Activated CD4-positive, alpha-beta T cell treated with anti-CD3 and anti-CD28 coated beads, Interleukin-2, amount 10 ng/mL, durations not matched to agents 7 days and 5 days (primary cell): ENCODE measurements at regions of chr22 and their contacts with region 1.

Region 1: GRCh38 chr22:42090596-42091454 is at the start of gene NDUFA6:
- DNase-seq: peak; percentile 99
- H3K4me3 Mint-ChIP-seq: peak within 1 kb of the TSS; percentile 98
- H3K27ac Mint-ChIP-seq: peak within 1 kb of the TSS; percentile 99
- H3K4me1 Mint-ChIP-seq: peaks cover 29% of the 10 kb centered on the region
- H3K27me3 Mint-ChIP-seq: no peaks in the 10 kb centered on the region
- total RNA-seq, gene NDUFA6: 85.9 to 89.8 TPM

Region 2: DNA sequence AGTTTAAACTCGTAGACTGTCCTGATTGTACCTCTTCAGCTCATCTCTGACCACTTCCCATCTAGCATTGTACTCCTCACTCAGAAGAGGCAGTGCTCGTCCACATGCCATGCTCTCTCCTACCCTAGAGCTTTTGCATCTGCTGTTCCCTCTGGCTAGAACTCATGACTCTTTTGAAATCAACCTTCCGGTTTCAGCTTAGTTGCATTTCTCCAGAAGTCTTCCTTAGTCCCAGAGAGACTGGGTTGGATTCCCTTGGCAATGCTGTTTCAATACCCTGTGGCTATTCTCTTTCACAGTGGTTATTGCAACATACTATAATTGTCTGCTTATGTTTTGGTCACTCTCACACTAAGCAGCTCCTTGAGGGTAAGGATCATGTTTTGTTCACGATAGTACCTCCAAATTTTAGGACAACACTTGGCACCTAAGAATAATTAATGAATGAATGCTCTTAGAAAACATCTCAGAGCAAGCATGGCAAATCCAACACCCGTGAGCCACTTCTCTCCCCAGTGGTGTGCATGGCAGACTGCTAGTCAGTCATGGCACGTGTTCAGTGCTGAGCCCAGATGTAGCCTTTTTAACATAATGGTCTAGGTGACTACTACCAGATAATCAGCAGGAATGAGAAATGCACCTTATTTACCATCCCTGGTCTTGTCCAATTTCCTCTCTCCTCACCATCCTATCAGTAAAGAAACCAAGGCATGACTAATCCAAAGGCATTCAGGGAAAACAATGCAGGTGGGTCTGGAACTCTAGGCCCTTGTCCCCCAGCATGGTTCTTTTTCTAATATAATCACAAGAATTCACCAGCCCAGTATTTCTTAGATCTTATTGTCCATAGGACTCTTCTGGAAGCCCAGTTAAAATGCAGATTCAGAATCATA is 107.1 kb before region 1 on chr22:
- CTCF ChIA-PET with region 1: no interaction called
- POLR2A ChIA-PET with region 1: no interaction called
- DNase-seq: no peak
- H3K4me3 Mint-ChIP-seq: no peak overlapping the region
- H3K27ac Mint-ChIP-seq: no peak overlapping the region
- H3K4me1 Mint-ChIP-seq: no peaks in the 10 kb centered on the region
- H3K27me3 Mint-ChIP-seq: peaks cover 5% of the 10 kb centered on the region

Region 3: GRCh38 chr22:42070517-42071422 is 20.1 kb before region 1 on chr22 and contains the start of gene NAGA:
- CTCF ChIA-PET with region 1: interaction called, 19 read pairs
- POLR2A ChIA-PET with region 1: interaction called, 5 read pairs
- DNase-seq: peak; percentile 97
- H3K4me3 Mint-ChIP-seq: peak within 1 kb of the TSS; percentile 87
- H3K27ac Mint-ChIP-seq: peak within 1 kb of the TSS; percentile 93
- H3K4me1 Mint-ChIP-seq: peaks cover 50% of the 10 kb centered on the region
- H3K27me3 Mint-ChIP-seq: no peaks in the 10 kb centered on the region
- total RNA-seq, gene NAGA: 22.4 to 23.0 TPM

Region 4: GRCh38 chr22:42079319-42080251 is 11.2 kb before region 1 on chr22 and contains the start of gene SMDT1:
- CTCF ChIA-PET with region 1: interaction called, 50 read pairs
- POLR2A ChIA-PET with region 1: interaction called, 4 read pairs
- DNase-seq: peak; percentile 99
- H3K4me3 Mint-ChIP-seq: peak within 1 kb of the TSS; percentile 96
- H3K27ac Mint-ChIP-seq: peak within 1 kb of the TSS; percentile 96
- H3K4me1 Mint-ChIP-seq: peaks cover 37% of the 10 kb centered on the region
- H3K27me3 Mint-ChIP-seq: no peaks in the 10 kb centered on the region
- total RNA-seq, gene SMDT1: 62.4 to 95.6 TPM

Region 5: DNA sequence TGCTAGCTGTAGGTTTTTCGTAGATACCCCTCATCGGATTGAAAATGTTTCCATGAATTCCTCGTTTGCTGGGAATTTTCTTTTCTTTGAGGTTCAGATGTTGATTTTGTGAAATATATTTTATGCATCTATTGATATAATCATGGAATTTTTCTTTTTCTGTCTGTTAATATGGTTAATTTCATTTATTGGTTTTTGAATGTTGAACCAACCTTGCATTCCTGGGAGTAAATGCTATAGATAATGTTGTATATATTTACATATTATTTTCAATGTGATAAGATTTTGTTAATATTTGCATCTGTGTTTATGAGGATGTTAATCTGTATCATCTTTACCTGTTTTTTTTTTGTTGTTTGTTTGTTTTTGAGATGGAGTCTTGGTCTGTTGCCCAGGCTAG is 10.4 kb after region 1 on chr22:
- CTCF ChIA-PET with region 1: interaction called, 16 read pairs
- POLR2A ChIA-PET with region 1: no interaction called
- DNase-seq: no peak
- H3K4me3 Mint-ChIP-seq: no peak overlapping the region
- H3K27ac Mint-ChIP-seq: no peak overlapping the region
- H3K4me1 Mint-ChIP-seq: peaks cover 1% of the 10 kb centered on the region
- H3K27me3 Mint-ChIP-seq: no peaks in the 10 kb centered on the region

Region 6: GRCh38 chr22:42116848-42117424 is 26.1 kb after region 1 on chr22:
- CTCF ChIA-PET with region 1: interaction called, 10 read pairs
- POLR2A ChIA-PET with region 1: no interaction called
- DNase-seq: no peak
- H3K4me3 Mint-ChIP-seq: no peak overlapping the region
- H3K27ac Mint-ChIP-seq: no peak overlapping the region
- H3K4me1 Mint-ChIP-seq: peaks cover 34% of the 10 kb centered on the region
- H3K27me3 Mint-ChIP-seq: no peaks in the 10 kb centered on the region

Region 7: DNA sequence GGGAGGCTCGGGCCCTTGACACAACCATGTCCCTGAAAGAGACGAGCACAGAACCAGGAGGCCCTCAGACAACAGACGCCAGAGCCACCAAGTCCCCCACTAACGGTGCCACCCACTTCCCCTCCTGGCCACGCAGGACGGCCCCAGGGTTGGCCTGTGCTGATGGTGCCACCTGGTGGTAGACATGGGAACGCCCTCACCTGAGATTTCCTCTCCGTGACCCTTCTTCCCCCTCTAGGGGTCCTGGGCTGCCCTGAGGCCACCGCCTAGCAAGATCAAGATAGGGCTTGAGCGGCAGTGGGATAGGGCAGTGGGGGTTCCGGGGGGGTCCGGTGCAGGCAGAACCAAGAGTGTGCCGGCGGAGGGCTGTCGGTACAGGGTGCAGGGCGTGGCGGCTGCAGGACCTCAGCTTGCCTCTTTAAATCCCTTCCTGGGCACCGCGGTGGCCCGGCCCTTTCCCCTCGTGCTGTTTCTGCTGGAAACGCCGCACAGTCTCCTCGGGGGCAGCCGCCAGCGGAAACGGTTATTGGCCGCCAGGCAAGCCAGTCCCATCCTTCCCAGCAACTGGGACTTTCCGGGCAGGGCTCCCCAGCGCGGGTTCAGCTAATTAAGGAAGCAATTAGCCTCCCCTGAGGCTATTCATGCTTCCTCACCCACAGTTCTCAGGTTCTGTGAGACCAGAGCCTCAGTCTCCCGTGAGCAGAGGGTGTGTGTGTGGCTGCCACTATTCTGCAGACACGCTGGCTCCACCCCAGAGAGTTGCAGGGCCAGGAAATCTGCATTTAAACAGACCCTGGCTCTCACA is 346.9 kb after region 1 on chr22:
- CTCF ChIA-PET with region 1: interaction called, 27 read pairs
- POLR2A ChIA-PET with region 1: no interaction called
- DNase-seq: peak; percentile 87
- H3K4me3 Mint-ChIP-seq: peak overlapping the region; percentile 73
- H3K27ac Mint-ChIP-seq: peak overlapping the region; percentile 76
- H3K4me1 Mint-ChIP-seq: peaks cover 28% of the 10 kb centered on the region
- H3K27me3 Mint-ChIP-seq: peaks cover 10% of the 10 kb centered on the region

Region 8: DNA sequence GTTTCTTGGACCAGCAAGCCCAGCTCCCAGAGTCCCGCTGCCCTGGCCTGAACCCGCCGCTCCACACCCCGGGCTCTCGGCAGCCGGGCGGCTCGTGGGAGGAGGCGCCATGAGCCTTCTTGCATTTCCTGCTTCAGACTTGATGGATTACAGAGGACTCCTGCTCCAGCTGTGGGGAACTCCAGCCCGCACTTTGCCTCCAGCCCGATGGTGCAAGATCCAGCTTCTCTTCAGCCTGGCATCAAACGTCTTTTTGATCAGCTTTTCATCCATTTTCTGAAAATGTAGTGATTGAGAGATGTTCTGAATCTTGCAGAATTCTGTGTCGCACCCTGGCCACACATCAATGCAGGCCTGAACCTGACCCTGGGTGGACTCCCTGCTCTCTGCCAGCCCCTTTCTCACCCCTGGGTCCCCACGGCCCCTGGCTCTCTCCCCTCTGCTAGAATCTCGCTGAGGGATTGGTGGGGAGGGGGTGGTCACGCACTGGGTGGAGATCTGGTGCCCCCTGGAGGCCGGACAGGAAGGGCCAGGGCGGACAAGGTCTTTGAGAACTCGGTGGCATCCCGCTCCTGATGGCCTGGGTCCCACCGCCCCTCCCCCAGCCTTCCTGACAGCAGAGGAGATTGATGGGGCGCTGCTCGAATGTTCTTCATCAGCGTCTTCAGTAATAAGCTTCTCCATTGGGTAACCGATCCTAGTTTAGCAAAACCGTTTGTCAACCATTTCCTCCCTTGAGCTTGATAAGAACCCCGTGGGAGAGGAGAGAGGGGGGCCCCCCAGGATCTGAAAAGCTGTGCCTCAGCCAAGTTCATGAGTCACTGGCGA is 353.5 kb after region 1 on chr22:
- CTCF ChIA-PET with region 1: interaction called, 27 read pairs
- POLR2A ChIA-PET with region 1: no interaction called
- DNase-seq: peak; percentile 86
- H3K4me3 Mint-ChIP-seq: peak overlapping the region; percentile 64
- H3K27ac Mint-ChIP-seq: peak overlapping the region; percentile 91
- H3K4me1 Mint-ChIP-seq: peaks cover 32% of the 10 kb centered on the region
- H3K27me3 Mint-ChIP-seq: no peaks in the 10 kb centered on the region